Dorsolateral prefrontal cortex (tissue), 120 donors: ENCODE measurements at regions of chr14 and their contacts with region 1.

Region 1: DNA sequence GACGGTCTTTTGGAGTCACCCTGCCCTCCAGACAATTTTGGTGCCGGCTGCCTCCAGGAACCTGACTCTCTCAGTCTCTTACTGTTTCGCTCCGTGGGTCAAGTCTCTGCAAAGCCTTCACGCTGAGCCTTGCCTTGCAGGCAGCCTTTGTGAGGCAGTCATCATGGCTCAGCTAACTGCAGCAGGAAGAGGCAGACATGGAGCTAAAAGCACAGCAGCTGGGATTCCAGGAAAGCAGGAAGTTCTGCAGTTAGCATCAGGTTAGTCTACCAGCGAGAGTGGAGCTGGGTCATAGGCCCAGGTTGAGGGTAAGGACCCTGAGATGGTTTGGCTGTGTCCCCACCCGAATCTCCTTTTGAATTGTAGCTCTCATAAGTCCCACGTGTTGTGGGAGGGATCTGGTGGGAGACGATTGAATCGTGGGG is 305.4 kb downstream of the PCNX1 start:
- DNase-seq: peak in 5 of 10 donors; percentile 31 to 71 (median 46)
- H3K4me3 ChIP-seq: peak overlapping the region in 47 of 59 donors; percentile 1 to 59 (median 37)
- H3K27ac ChIP-seq: peak overlapping the region in 55 of 59 donors; percentile 7 to 89 (median 72)
- H3K27me3 ChIP-seq: no peaks in the 10 kb centered on the region
- CTCF ChIP-seq: no peak

Region 2: DNA sequence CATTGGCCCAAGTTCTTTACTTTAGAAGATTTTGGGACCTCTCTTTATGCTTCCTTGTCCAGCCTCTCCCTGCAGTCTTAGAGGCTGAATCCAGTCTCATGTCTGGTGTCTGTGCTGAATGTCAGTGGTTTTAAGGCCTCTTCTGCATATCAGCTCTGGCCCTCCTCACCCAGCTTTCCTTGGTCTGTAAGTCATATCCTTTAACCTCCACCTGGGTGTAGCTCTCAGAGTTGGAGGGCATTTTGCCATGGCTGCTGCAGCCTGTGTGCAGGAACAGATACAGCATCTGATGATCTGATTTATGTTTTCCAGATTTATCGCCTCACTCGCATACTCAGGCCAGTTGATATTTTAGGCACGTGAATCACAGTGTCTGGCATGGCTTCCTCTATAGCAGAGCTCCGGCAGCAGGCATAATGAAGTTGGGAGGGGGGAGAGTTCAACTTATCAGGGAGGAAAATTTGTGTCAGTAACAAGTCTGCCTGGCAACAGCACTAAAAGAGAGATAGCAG is 29.6 kb after region 1 on chr14:
- intact Hi-C with region 1: no loop called
- DNase-seq: peak in 6 of 10 donors; percentile 3 to 56 (median 44)
- H3K4me3 ChIP-seq: no peak overlapping the region
- H3K27ac ChIP-seq: peak overlapping the region in 48 of 59 donors; percentile 7 to 91 (median 64)
- H3K27me3 ChIP-seq: no peaks in the 10 kb centered on the region
- CTCF ChIP-seq: no peak

Region 3: GRCh38 chr14:71309753-71310152 is 97.1 kb after region 1 on chr14:
- intact Hi-C with region 1: loop called in 1 of 2 experiments (anchors 5 kb)
- DNase-seq: no peak
- H3K4me3 ChIP-seq: no peak overlapping the region
- H3K27ac ChIP-seq: peak overlapping the region in 25 of 59 donors; percentile 5 to 71 (median 26)
- H3K27me3 ChIP-seq: no peaks in the 10 kb centered on the region
- CTCF ChIP-seq: peak in 3 of 56 donors; percentile 11 to 28 (median 13)

Region 4: DNA sequence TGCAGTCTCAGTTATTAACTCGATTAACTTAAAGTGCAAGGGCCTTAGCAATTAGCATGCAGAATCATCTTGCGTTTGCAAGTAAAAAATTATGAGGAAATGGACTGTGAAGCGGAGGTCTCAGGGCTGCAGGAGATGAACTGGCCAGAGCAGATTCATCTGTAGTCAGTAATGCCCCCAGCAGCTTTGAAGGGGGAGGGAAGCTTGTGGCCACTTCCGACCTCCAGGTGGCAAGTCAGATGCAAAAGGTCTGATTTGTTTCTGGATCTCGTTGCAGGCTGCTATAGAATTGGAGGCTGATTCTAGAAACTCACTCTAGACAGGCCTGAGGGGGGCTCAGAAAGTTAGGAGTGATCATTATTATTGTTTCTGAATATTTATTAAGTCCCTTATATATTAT is 612.1 kb after region 1 on chr14:
- intact Hi-C with region 1: no loop called
- DNase-seq: no peak
- H3K4me3 ChIP-seq: no peak overlapping the region
- H3K27ac ChIP-seq: no peak overlapping the region
- H3K27me3 ChIP-seq: no peaks in the 10 kb centered on the region
- CTCF ChIP-seq: no peak